IMR-90 (cell line): ENCODE measurements at regions of chr17 and their contacts with region 1.

Region 1: GRCh38 chr17:36034127-36034526 is 16.4 kb upstream of the CCL23 start:
- DNase-seq: no peak
- ATAC-seq: no peak
- H3K4me3 ChIP-seq: no peak overlapping the region
- H3K27ac ChIP-seq: no peak overlapping the region
- H3K4me1 ChIP-seq: no peaks in the 10 kb centered on the region
- H3K27me3 ChIP-seq: no peaks in the 10 kb centered on the region
- CTCF ChIP-seq: no peak
- POLR2A ChIP-seq: no peak
- RAD21 ChIP-seq: no peak

Region 2: GRCh38 chr17:36008998-36009665 is 25.0 kb before region 1 on chr17:
- CTCF ChIA-PET with region 1: no interaction called
- POLR2A ChIA-PET with region 1: no interaction called
- dilution Hi-C with region 1: no loop called
- in situ Hi-C with region 1: no loop called
- intact Hi-C with region 1: loop called (anchors 1 kb)
- DNase-seq: peak; percentile 12
- ATAC-seq: peak; percentile 64
- H3K4me3 ChIP-seq: no peak overlapping the region
- H3K27ac ChIP-seq: no peak overlapping the region
- H3K4me1 ChIP-seq: no peaks in the 10 kb centered on the region
- H3K27me3 ChIP-seq: peaks cover 3% of the 10 kb centered on the region
- CTCF ChIP-seq: peak; percentile 59
- POLR2A ChIP-seq: no peak
- RAD21 ChIP-seq: peak; percentile 45

Region 3: DNA sequence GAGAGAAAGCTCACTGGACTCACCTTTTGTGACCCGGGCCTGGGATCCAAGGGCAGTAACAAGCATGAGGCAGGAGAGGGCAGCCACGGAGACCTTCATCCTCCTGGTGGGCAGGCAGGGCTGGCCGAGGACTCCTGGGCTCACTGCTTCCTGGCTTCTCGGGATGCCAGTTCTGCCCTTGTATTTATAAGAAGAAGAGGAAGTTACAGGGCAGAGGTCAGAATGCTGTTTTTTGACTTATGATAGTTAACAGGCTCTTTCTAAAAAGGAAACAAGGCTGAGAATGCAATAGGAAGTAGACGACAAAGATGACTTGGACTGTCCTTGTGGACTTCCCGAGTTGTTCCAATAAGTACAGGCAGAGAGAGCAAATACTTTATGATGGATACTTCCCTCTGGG is 16.3 kb before region 1 on chr17 and contains the start of gene CCL23:
- CTCF ChIA-PET with region 1: no interaction called
- POLR2A ChIA-PET with region 1: no interaction called
- dilution Hi-C with region 1: no loop called
- in situ Hi-C with region 1: no loop called
- intact Hi-C with region 1: loop called (anchors 2 kb)
- DNase-seq: no peak
- ATAC-seq: no peak
- H3K4me3 ChIP-seq: no peak within 1 kb of the TSS
- H3K27ac ChIP-seq: no peak within 1 kb of the TSS
- H3K4me1 ChIP-seq: no peaks in the 10 kb centered on the region
- H3K27me3 ChIP-seq: peaks cover 1% of the 10 kb centered on the region
- CTCF ChIP-seq: no peak
- POLR2A ChIP-seq: no peak
- RAD21 ChIP-seq: no peak
- total RNA-seq, gene CCL23: not detected in 2 replicates

Region 4: GRCh38 chr17:36072431-36073121 is 38.4 kb after region 1 on chr17:
- CTCF ChIA-PET with region 1: no interaction called
- POLR2A ChIA-PET with region 1: no interaction called
- dilution Hi-C with region 1: no loop called
- in situ Hi-C with region 1: no loop called
- intact Hi-C with region 1: no loop called
- DNase-seq: peak; percentile 10
- ATAC-seq: peak; percentile 79
- H3K4me3 ChIP-seq: no peak overlapping the region
- H3K27ac ChIP-seq: no peak overlapping the region
- H3K4me1 ChIP-seq: no peaks in the 10 kb centered on the region
- H3K27me3 ChIP-seq: peaks cover 1% of the 10 kb centered on the region; the same call in 1 of the 2 replicates
- CTCF ChIP-seq: peak; percentile 48
- POLR2A ChIP-seq: no peak
- RAD21 ChIP-seq: peak; percentile 31